CD4-positive, alpha-beta T cell (primary cell): ENCODE measurements at regions of chr22 and their contacts with region 1.

Region 1: GRCh38 chr22:22235558-22235957 is 9.0 kb upstream of the VPREB1 start:
- DNase-seq: peak; percentile 17 to 78 (median 32)
- ATAC-seq: no peak
- H3K4me3 ChIP-seq: no peak overlapping the region
- H3K4me3 Mint-ChIP-seq: no peak overlapping the region
- H3K27ac ChIP-seq: no peak overlapping the region
- H3K27ac Mint-ChIP-seq: no peak overlapping the region
- H3K4me1 ChIP-seq: no peaks in the 10 kb centered on the region
- H3K4me1 Mint-ChIP-seq: no peaks in the 10 kb centered on the region
- H3K27me3 ChIP-seq: no peaks in the 10 kb centered on the region
- H3K27me3 Mint-ChIP-seq: peaks cover 3% of the 10 kb centered on the region
- CTCF ChIP-seq: peak; percentile 60

Region 2: GRCh38 chr22:22156716-22157347 is 78.7 kb before region 1 on chr22:
- CTCF ChIA-PET with region 1: no interaction called
- POLR2A ChIA-PET with region 1: no interaction called
- intact Hi-C with region 1: loop called (anchors 2 kb)
- DNase-seq: peak; percentile 13 to 84 (median 48)
- ATAC-seq: peak; percentile 81
- H3K4me3 ChIP-seq: no peak overlapping the region
- H3K4me3 Mint-ChIP-seq: no peak overlapping the region
- H3K27ac ChIP-seq: no peak overlapping the region
- H3K27ac Mint-ChIP-seq: no peak overlapping the region
- H3K4me1 ChIP-seq: peaks cover 7% of the 10 kb centered on the region
- H3K4me1 Mint-ChIP-seq: peaks cover 6% of the 10 kb centered on the region
- H3K27me3 ChIP-seq: peaks cover 0 to 3% of the 10 kb centered on the region in 2 experiments
- H3K27me3 Mint-ChIP-seq: peaks cover 12% of the 10 kb centered on the region
- CTCF ChIP-seq: peak; percentile 68

Region 3: GRCh38 chr22:22171357-22172218 is 64.0 kb before region 1 on chr22:
- CTCF ChIA-PET with region 1: no interaction called
- POLR2A ChIA-PET with region 1: no interaction called
- intact Hi-C with region 1: no loop called
- DNase-seq: no peak
- ATAC-seq: no peak
- H3K4me3 ChIP-seq: no peak overlapping the region
- H3K4me3 Mint-ChIP-seq: no peak overlapping the region
- H3K27ac ChIP-seq: no peak overlapping the region
- H3K27ac Mint-ChIP-seq: no peak overlapping the region
- H3K4me1 ChIP-seq: peaks cover 9% of the 10 kb centered on the region
- H3K4me1 Mint-ChIP-seq: peaks cover 26% of the 10 kb centered on the region
- H3K27me3 ChIP-seq: peaks cover 0 to 3% of the 10 kb centered on the region in 2 experiments
- H3K27me3 Mint-ChIP-seq: peaks cover 17% of the 10 kb centered on the region
- CTCF ChIP-seq: no peak

Region 4: DNA sequence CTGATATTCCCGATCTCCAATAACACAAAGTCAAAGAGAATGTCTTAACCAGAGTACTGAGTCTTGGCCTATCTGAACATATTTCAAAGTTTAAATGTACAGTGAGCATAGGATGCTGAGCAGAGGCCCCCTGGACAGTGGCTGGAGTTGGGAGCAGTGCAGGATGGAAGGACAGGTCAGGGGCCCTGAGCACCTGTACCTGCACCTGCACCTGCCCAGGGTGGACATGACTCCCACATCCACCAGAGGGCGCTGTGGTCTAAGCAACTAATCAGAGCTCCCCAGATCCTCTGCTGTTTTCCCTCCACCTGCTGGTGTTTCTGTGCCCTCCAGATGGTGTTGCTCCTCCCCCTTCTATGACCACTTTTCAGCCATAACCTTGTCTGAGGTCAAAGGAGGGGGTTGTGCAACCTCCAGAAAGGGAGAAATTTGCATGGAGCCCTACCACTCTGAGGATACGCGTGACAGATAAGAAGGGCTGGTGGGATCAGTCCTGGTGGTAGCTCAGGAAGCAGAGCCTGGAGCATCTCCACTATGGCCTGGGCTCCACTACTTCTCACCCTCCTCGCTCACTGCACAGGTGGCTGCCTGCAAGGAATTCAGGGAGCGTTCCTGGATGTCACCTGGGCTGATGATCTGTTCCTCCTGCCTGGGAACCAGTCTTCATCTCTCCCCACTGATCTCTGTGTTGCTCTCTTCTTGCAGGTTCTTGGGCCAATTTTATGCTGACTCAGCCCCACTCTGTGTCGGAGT is 40.1 kb before region 1 on chr22:
- CTCF ChIA-PET with region 1: interaction called, 13 read pairs
- POLR2A ChIA-PET with region 1: interaction called, 3 read pairs
- intact Hi-C with region 1: loop called in 1 of 2 experiments (anchors 5 kb)
- DNase-seq: peak; percentile 67 to 88 (median 78)
- ATAC-seq: peak; percentile 84
- H3K4me3 ChIP-seq: no peak overlapping the region
- H3K4me3 Mint-ChIP-seq: no peak overlapping the region
- H3K27ac ChIP-seq: no peak overlapping the region
- H3K27ac Mint-ChIP-seq: no peak overlapping the region
- H3K4me1 ChIP-seq: no peaks in the 10 kb centered on the region
- H3K4me1 Mint-ChIP-seq: no peaks in the 10 kb centered on the region
- H3K27me3 ChIP-seq: peaks cover 2 to 5% of the 10 kb centered on the region in 2 experiments
- H3K27me3 Mint-ChIP-seq: peaks cover 37% of the 10 kb centered on the region
- CTCF ChIP-seq: peak; percentile 89

Region 5: DNA sequence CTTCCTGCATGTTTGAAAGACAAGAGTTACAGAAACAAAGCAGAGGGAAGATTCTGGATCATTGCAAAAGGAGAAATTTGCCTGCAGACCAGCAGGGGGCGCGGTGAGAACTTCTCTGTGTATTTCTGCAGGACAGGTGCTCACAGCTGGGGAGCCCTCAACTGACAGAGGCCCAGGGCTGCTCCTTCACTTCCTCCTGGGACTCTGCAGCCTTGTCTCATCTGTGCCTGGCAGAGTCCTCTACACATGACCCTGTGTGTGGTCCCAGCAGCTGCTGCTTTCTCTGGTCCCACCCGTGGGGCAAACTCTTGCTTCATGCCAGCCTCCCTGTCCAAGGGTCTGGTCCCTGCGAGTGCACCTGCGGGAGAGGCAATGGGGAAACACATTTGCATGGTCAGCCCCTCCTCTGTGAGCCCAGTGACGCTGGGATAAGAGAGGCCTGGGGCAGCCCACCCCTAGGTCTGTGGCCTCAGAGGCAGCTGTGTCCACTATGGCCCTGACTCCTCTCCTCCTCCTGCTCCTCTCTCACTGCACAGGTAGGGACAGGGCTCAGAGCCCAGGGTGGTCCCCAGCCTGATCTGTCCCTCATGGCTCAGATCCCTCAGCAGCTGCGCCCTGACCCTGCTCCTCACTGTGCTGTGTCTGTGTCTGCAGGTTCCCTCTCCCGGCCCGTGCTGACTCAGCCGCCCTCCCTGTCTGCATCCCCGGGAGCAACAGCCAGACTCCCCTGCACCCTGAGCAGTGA is 34.2 kb before region 1 on chr22:
- CTCF ChIA-PET with region 1: interaction called, 13 read pairs
- POLR2A ChIA-PET with region 1: no interaction called
- intact Hi-C with region 1: loop called in 1 of 2 experiments (anchors 5 kb)
- DNase-seq: peak in 9 of 14 experiments; percentile 29 to 73 (median 52)
- ATAC-seq: peak; percentile 43
- H3K4me3 ChIP-seq: no peak overlapping the region
- H3K4me3 Mint-ChIP-seq: no peak overlapping the region
- H3K27ac ChIP-seq: no peak overlapping the region
- H3K27ac Mint-ChIP-seq: no peak overlapping the region
- H3K4me1 ChIP-seq: peaks cover 6% of the 10 kb centered on the region
- H3K4me1 Mint-ChIP-seq: no peaks in the 10 kb centered on the region
- H3K27me3 ChIP-seq: peaks cover 2 to 10% of the 10 kb centered on the region in 2 experiments
- H3K27me3 Mint-ChIP-seq: peaks cover 6% of the 10 kb centered on the region
- CTCF ChIP-seq: peak; percentile 88

Region 6: DNA sequence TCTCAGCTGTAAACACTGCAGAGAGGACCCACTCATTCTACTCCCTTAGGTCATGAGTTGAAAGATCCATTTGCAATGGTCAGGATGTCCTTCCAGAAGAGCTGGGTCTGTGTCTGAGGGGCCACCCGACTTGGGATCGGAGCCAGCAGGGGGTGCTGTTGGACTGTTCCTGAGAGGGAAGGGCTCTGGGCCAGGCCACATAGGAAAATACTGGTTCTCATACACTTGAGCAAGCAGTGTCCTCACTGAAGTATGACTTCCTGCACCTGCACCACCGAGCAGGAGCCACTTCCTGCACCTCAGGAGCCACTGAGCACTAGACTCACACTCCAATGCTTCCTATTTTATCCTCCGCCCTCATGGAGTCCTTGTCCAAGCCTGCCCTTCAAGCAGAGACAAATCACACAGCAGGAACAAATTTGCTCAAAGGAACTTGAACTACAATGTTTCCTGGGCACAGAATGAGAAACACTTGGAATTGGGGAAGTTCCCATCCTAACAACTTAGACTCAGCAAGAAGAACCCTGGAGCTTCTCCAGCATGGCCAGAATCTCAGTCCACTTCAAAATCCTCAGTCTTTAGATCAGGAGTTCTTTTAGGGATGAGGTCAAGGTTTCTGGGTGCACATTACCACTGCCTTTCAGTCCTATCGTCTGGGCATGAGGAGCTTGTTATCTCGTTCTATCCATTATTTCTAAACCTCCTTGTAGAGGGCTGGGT is 27.6 kb before region 1 on chr22:
- CTCF ChIA-PET with region 1: interaction called, 14 read pairs
- POLR2A ChIA-PET with region 1: interaction called, 7 read pairs
- intact Hi-C with region 1: loop called (anchors 1 kb)
- DNase-seq: peak; percentile 60 to 87 (median 76)
- ATAC-seq: peak; percentile 77
- H3K4me3 ChIP-seq: no peak overlapping the region
- H3K4me3 Mint-ChIP-seq: no peak overlapping the region
- H3K27ac ChIP-seq: no peak overlapping the region
- H3K27ac Mint-ChIP-seq: peak overlapping the region; percentile 1
- H3K4me1 ChIP-seq: peaks cover 18% of the 10 kb centered on the region
- H3K4me1 Mint-ChIP-seq: peaks cover 33% of the 10 kb centered on the region
- H3K27me3 ChIP-seq: no peaks in the 10 kb centered on the region
- H3K27me3 Mint-ChIP-seq: no peaks in the 10 kb centered on the region
- CTCF ChIP-seq: peak; percentile 78

Region 7: GRCh38 chr22:22219140-22219996 is 16.2 kb before region 1 on chr22:
- CTCF ChIA-PET with region 1: no interaction called
- POLR2A ChIA-PET with region 1: no interaction called
- intact Hi-C with region 1: no loop called
- DNase-seq: no peak
- ATAC-seq: no peak
- H3K4me3 ChIP-seq: no peak overlapping the region
- H3K4me3 Mint-ChIP-seq: no peak overlapping the region
- H3K27ac ChIP-seq: no peak overlapping the region
- H3K27ac Mint-ChIP-seq: no peak overlapping the region
- H3K4me1 ChIP-seq: no peaks in the 10 kb centered on the region
- H3K4me1 Mint-ChIP-seq: no peaks in the 10 kb centered on the region
- H3K27me3 ChIP-seq: no peaks in the 10 kb centered on the region
- H3K27me3 Mint-ChIP-seq: no peaks in the 10 kb centered on the region
- CTCF ChIP-seq: no peak